HEK293 (cell line): ENCODE measurements at regions of chr2 and their contacts with region 1.

Region 1: GRCh38 chr2:12716282-12717190 is at the start of gene TRIB2:
- H3K4me3 ChIP-seq: peak within 1 kb of the TSS; percentile 84
- H3K27ac ChIP-seq: peak within 1 kb of the TSS; percentile 99
- H3K4me1 ChIP-seq: peaks cover 18% of the 10 kb centered on the region
- CTCF ChIP-seq: peak; percentile 15; the same call in 1 of the 2 replicates

Region 2: DNA sequence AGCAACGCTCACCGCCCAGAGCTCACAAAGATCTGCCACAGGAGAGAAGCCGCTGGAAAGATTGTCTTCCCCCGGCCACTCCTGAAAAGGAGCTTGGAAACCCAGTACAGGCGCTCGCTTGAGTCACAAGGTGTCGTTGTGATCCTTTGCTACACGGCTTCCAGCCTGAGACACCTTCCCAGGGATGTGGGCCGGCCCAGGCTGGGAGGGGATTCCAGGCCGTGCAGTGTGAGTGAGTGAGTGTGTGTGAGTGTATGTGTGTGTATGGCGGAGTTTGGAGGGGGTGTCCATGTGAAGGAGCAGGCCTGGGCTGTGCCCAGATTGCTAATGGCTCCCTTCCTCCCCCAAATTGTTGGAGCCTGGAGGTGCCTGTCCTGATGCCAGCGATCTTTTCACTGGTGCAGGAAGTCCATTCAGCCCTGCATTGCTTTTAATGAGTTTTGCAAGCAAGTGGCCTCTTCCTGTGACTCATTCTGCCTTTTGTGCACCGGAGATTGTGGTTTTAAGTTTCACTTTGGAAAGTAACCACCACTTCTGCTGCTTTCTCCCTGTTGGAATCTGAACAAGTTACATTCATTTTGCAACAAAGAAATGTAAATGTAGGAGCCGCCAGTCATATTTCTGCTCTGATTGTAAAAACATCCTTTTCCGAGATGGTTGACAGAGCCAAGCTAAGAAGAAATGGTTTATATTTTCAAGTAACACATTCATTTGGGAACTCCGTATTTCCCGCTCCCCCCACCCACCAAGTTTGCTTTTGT is 886.4 kb before region 1 on chr2:
- CTCF ChIA-PET with region 1: interaction called, 30 read pairs
- POLR2A ChIA-PET with region 1: interaction called, 4 read pairs
- H3K4me3 ChIP-seq: peak overlapping the region; percentile 27
- H3K27ac ChIP-seq: peak overlapping the region; percentile 75
- H3K4me1 ChIP-seq: peaks cover 10% of the 10 kb centered on the region
- CTCF ChIP-seq: peak; percentile 88

Region 3: GRCh38 chr2:12303181-12304030 is 413.1 kb before region 1 on chr2:
- CTCF ChIA-PET with region 1: interaction called, 3 read pairs
- POLR2A ChIA-PET with region 1: interaction called, 10 read pairs
- H3K4me3 ChIP-seq: no peak overlapping the region
- H3K27ac ChIP-seq: peak overlapping the region; percentile 84
- H3K4me1 ChIP-seq: peaks cover 20% of the 10 kb centered on the region
- CTCF ChIP-seq: peak; percentile 21; the same call in 1 of the 2 replicates

Region 4: DNA sequence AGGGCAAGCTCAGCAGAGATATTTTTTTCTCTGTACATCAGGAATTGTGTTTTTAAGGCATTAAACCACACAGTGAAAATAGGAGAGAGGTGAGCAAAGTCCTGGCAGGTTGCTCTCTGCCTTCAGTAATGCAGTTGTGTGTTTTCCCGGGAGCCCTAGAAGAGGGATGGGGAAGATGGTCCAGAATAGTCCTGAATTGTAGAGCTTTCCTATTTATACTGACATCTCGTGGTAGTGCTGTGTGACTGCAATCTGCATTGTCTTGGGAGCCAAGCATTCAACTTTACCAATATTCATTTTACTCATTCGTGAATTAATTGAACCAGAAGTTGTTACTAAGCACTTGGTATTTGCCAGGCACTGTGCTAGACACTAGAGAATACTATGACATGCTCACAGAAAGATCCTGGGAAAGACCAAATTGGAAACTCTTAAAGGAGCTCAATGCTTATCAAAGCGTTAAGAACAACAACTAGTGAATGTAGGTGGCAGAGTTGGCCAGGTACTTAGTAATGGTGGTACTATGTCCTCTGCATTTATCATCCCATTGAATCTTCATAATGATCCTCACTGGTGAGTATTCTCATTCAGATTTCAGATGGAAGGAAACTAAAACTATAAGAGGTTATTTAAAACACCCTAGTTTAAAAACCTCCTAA is 214.8 kb after region 1 on chr2:
- CTCF ChIA-PET with region 1: interaction called, 18 read pairs
- POLR2A ChIA-PET with region 1: interaction called, 5 read pairs
- H3K4me3 ChIP-seq: no peak overlapping the region
- H3K27ac ChIP-seq: peak overlapping the region; percentile 86
- H3K4me1 ChIP-seq: peaks cover 27% of the 10 kb centered on the region
- CTCF ChIP-seq: no peak

Region 5: DNA sequence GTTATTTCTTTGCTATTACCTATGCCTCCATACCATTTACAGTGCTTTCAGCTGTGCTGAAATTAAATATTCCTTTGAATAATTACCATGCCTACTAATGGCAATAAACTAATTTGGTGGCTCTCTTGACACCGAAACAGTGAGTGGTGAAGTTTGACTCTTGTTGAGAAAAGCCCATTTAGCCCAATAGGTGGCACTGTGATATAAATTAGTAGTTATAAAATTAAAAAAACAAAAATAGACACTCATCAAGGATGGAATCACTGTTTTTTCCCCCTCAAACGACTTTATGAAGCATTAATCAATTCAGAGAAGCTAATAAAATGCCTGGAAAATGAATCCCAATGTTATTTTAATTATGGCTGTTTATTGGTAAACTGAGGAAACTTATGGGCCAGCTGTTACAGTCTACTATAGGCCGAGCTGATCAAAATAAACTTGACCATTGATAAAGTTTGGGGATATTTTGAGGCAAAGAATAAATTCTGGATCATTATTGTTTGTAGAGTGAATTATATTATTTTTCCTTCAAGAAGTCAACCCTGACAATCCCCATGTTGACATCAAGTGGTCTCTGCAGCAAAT is 339.8 kb after region 1 on chr2:
- CTCF ChIA-PET with region 1: no interaction called
- POLR2A ChIA-PET with region 1: no interaction called
- H3K4me3 ChIP-seq: no peak overlapping the region
- H3K27ac ChIP-seq: no peak overlapping the region
- H3K4me1 ChIP-seq: no peaks in the 10 kb centered on the region
- CTCF ChIP-seq: no peak